CD8-positive, alpha-beta T cell (primary cell): ENCODE measurements at regions of chr15 and their contacts with region 1.

Region 1: GRCh38 chr15:74781431-74782258 is at the start of gene CSK:
- DNase-seq: peak; percentile 56 to 92 (median 79)
- ATAC-seq: peak; percentile 63
- H3K4me3 ChIP-seq: peak within 1 kb of the TSS; percentile 93 to 98
- H3K4me3 Mint-ChIP-seq: peak within 1 kb of the TSS; percentile 85
- H3K27ac ChIP-seq: peak within 1 kb of the TSS; percentile 74 to 90
- H3K27ac Mint-ChIP-seq: peak within 1 kb of the TSS; percentile 93
- H3K4me1 ChIP-seq: peaks cover 70% of the 10 kb centered on the region
- H3K4me1 Mint-ChIP-seq: peaks cover 66% of the 10 kb centered on the region
- H3K27me3 ChIP-seq: no peaks in the 10 kb centered on the region
- H3K27me3 Mint-ChIP-seq: no peaks in the 10 kb centered on the region
- CTCF ChIP-seq: peak; percentile 56
- total RNA-seq, gene CSK: 99.5 to 118 TPM

Region 2: GRCh38 chr15:74723754-74724334 is 57.8 kb before region 1 on chr15:
- CTCF ChIA-PET with region 1: no interaction called
- POLR2A ChIA-PET with region 1: no interaction called
- intact Hi-C with region 1: no loop called
- DNase-seq: peak in 2 of 9 experiments; percentile 34 to 51
- ATAC-seq: peak; percentile 45
- H3K4me3 ChIP-seq: no peak overlapping the region
- H3K4me3 Mint-ChIP-seq: no peak overlapping the region
- H3K27ac ChIP-seq: no peak overlapping the region
- H3K27ac Mint-ChIP-seq: no peak overlapping the region
- H3K4me1 ChIP-seq: peaks cover 7% of the 10 kb centered on the region
- H3K4me1 Mint-ChIP-seq: peaks cover 9% of the 10 kb centered on the region
- H3K27me3 ChIP-seq: peaks cover 0 to 3% of the 10 kb centered on the region in 2 experiments
- H3K27me3 Mint-ChIP-seq: peaks cover 12% of the 10 kb centered on the region
- CTCF ChIP-seq: no peak

Region 3: DNA sequence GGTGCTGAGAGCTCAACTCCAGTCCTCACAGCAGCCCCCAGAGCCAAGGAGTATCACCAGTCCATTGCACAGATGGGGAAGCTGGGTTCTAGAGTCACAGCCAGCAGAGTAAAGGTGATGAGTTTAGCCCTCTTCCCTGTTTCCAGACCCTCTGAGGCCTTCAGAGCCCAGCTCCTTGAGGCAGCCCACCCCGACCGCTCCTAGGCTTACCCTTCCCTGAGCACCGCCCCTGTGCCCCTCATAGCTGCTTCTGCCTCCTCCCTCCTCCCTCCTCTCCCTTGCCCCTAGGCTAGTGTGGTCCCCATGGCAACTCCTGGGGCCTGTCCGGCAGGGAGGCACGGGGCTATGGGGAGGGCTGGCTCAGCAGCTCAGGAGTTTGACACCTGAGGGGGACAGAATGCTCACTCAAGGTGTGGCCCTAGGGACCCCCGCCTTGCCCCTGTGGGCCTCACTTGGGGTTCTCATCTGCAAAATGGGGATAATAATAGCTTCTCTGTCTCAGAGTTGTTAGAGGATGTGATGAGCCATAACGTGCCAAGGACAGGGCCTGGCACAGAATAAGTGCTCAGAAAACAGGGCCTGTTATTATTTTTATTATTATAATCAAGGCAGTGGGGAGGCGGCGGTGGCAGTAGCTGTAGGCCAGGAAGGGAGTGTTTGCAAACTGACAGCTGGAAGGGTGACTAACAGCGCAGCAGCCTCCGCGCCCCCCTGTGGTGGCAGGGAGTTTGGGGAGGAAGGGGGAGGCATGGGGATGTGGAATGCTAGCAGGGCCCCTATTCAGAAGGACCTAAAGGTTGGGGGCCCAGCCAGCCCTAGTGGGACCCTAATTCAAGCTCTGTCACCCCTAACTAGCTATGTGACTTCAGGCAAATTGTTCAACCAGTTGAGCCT is 11.7 kb after region 1 on chr15:
- CTCF ChIA-PET with region 1: interaction called, 1,956 read pairs
- POLR2A ChIA-PET with region 1: interaction called, 512 read pairs
- intact Hi-C with region 1: loop called (anchors 1 kb)
- DNase-seq: peak; percentile 60 to 88 (median 84)
- ATAC-seq: peak; percentile 51
- H3K4me3 ChIP-seq: peak overlapping the region; percentile 20 to 24
- H3K4me3 Mint-ChIP-seq: peak overlapping the region; percentile 69
- H3K27ac ChIP-seq: peak overlapping the region in 1 of 2 experiments; percentile 72
- H3K27ac Mint-ChIP-seq: peak overlapping the region; percentile 91
- H3K4me1 ChIP-seq: peaks cover 98% of the 10 kb centered on the region
- H3K4me1 Mint-ChIP-seq: peaks cover 89% of the 10 kb centered on the region
- H3K27me3 ChIP-seq: no peaks in the 10 kb centered on the region
- H3K27me3 Mint-ChIP-seq: no peaks in the 10 kb centered on the region
- CTCF ChIP-seq: peak; percentile 66

Region 4: GRCh38 chr15:74799856-74800547 is 18.4 kb after region 1 on chr15:
- CTCF ChIA-PET with region 1: interaction called, 1,956 read pairs
- POLR2A ChIA-PET with region 1: interaction called, 512 read pairs
- intact Hi-C with region 1: loop called (anchors 1 kb)
- DNase-seq: peak; percentile 74 to 94 (median 87)
- ATAC-seq: peak; percentile 95
- H3K4me3 ChIP-seq: no peak overlapping the region
- H3K4me3 Mint-ChIP-seq: peak overlapping the region; percentile 42
- H3K27ac ChIP-seq: peak overlapping the region; percentile 36 to 94
- H3K27ac Mint-ChIP-seq: peak overlapping the region; percentile 92
- H3K4me1 ChIP-seq: peaks cover 56% of the 10 kb centered on the region
- H3K4me1 Mint-ChIP-seq: peaks cover 56% of the 10 kb centered on the region
- H3K27me3 ChIP-seq: no peaks in the 10 kb centered on the region
- H3K27me3 Mint-ChIP-seq: no peaks in the 10 kb centered on the region
- CTCF ChIP-seq: peak; percentile 92

Region 5: GRCh38 chr15:74835307-74835823 is 53.7 kb after region 1 on chr15:
- CTCF ChIA-PET with region 1: interaction called, 14 read pairs
- POLR2A ChIA-PET with region 1: no interaction called
- intact Hi-C with region 1: no loop called
- DNase-seq: peak in 8 of 9 experiments; percentile 13 to 62 (median 44)
- ATAC-seq: peak; percentile 65
- H3K4me3 ChIP-seq: no peak overlapping the region
- H3K4me3 Mint-ChIP-seq: no peak overlapping the region
- H3K27ac ChIP-seq: no peak overlapping the region
- H3K27ac Mint-ChIP-seq: no peak overlapping the region
- H3K4me1 ChIP-seq: no peaks in the 10 kb centered on the region
- H3K4me1 Mint-ChIP-seq: no peaks in the 10 kb centered on the region
- H3K27me3 ChIP-seq: no peaks in the 10 kb centered on the region
- H3K27me3 Mint-ChIP-seq: peaks cover 2% of the 10 kb centered on the region
- CTCF ChIP-seq: peak; percentile 62